Spleen (tissue), 13 donors: ENCODE measurements at regions of chr9 and their contacts with region 1.

Region 1: DNA sequence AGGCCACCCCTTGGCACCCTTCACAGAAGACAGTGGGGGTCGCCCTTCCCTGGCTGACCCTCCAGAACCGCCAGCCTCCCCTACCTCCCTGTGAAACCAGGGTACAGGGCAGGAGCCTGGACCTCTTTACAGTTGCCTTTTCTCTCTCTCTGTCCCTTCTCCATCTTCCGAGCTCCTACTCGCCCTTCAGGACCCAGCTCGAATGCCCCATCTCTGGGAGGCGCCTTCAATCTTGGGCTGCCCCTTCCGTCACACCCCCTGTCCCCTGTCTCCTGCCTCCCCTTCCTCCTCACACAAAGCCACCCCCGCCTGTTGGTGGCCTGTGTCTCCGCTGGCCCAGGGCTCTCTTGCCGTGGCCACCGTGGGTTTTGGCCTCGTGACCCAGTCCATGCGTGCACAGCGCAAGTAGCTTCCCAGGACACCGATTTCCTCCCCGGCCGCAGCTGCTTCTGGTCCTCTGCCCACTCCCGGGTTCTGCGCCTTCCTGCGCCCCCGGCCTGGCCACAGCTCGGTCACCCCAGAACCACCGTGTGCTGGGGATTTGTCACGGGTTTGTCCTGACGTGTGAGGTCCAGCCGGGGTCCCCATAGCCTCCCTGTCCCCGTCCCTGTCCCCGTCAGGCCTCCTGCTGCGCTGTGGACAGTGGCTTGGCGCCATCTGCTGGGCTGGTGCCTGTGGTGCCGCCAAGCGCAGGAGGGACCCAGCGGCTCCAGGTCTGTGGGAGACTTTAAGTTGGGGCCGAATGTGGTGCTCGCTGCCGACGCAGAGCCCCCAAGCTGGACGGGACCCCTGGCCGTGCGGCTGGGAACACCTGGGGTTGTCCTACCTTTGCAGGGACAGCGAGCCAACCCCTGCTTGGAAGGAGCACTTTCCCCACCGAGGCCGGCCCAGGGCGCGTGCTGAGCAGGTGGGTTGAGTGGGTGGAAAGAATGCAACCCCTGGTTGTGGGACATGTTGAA is 4.0 kb upstream of the TMEM250 start:
- DNase-seq: peak; percentile 94
- H3K4me3 ChIP-seq: peak overlapping the region in 2 of 8 donors; percentile 7 to 48
- H3K27ac ChIP-seq: peak overlapping the region in 1 of 8 donors; percentile 45
- H3K4me1 ChIP-seq: peaks cover 9 to 38% (median 29%) of the 10 kb centered on the region in 6 donors
- H3K27me3 ChIP-seq: peaks cover 0 to 19% (median 0%) of the 10 kb centered on the region in 7 donors
- CTCF ChIP-seq: peak; percentile 96 to 99 (median 98)
- POLR2A ChIP-seq: peak in 1 of 3 donors; percentile 25

Region 2: GRCh38 chr9:135602789-135603481 is 519.8 kb before region 1 on chr9:
- intact Hi-C with region 1: loop called (anchors 10 kb)
- DNase-seq: peak; percentile 59
- H3K4me3 ChIP-seq: no peak overlapping the region
- H3K27ac ChIP-seq: no peak overlapping the region
- H3K4me1 ChIP-seq: peaks cover 0 to 8% (median 2%) of the 10 kb centered on the region in 6 donors
- H3K27me3 ChIP-seq: peaks cover 0 to 54% (median 0%) of the 10 kb centered on the region in 7 donors
- CTCF ChIP-seq: peak; percentile 40 to 75 (median 68)
- POLR2A ChIP-seq: no peak

Region 3: GRCh38 chr9:135864447-135865049 is 258.2 kb before region 1 on chr9:
- intact Hi-C with region 1: loop called (anchors 2 kb)
- DNase-seq: peak; percentile 82
- H3K4me3 ChIP-seq: no peak overlapping the region
- H3K27ac ChIP-seq: no peak overlapping the region
- H3K4me1 ChIP-seq: peaks cover 0 to 12% (median 8%) of the 10 kb centered on the region in 6 donors
- H3K27me3 ChIP-seq: no peaks in the 10 kb centered on the region
- CTCF ChIP-seq: peak; percentile 50 to 91 (median 85)
- POLR2A ChIP-seq: no peak

Region 4: DNA sequence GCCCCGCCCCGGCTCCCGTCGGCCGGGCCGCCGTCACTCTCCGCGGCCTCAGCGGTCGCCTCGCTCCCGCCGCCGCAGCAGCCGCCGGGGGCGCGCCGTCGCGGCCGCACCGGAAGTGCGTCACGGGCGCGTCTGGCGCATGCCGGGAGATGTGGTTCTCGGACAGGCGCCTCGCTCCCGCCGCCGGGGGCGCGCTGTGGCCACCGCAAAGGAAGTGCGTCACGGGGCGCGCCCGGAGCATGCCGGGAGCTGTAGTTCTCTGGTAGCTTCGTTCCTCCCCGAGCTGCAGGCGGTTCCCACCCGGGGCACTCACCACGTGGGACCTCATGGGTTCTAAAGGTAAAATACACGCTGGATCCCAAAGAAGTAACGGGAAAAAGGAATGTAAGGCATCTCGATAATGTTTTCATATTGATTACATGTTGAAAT is 161.4 kb before region 1 on chr9 and contains the start of gene UBAC1:
- intact Hi-C with region 1: loop called (anchors 2 kb)
- DNase-seq: peak; percentile 99
- H3K4me3 ChIP-seq: peak within 1 kb of the TSS; percentile 76 to 99 (median 88)
- H3K27ac ChIP-seq: peak within 1 kb of the TSS; percentile 70 to 92 (median 86)
- H3K4me1 ChIP-seq: peaks cover 10 to 59% (median 32%) of the 10 kb centered on the region in 6 donors
- H3K27me3 ChIP-seq: peaks cover 0 to 14% (median 0%) of the 10 kb centered on the region in 7 donors
- CTCF ChIP-seq: peak; percentile 32 to 77 (median 60)
- POLR2A ChIP-seq: peak in 1 of 3 donors; percentile 4
- total RNA-seq, gene UBAC1: 32.3 to 45.8 (median 34.0) TPM

Region 5: GRCh38 chr9:136045971-136046920 is 76.5 kb before region 1 on chr9:
- intact Hi-C with region 1: no loop called
- DNase-seq: peak; percentile 89
- H3K4me3 ChIP-seq: peak overlapping the region in 3 of 8 donors; percentile 23 to 51 (median 24)
- H3K27ac ChIP-seq: peak overlapping the region in 7 of 8 donors; percentile 46 to 92 (median 72)
- H3K4me1 ChIP-seq: peaks cover 3 to 99% (median 61%) of the 10 kb centered on the region in 6 donors
- H3K27me3 ChIP-seq: peaks cover 0 to 14% (median 8%) of the 10 kb centered on the region in 7 donors
- CTCF ChIP-seq: no peak
- POLR2A ChIP-seq: no peak

Region 6: DNA sequence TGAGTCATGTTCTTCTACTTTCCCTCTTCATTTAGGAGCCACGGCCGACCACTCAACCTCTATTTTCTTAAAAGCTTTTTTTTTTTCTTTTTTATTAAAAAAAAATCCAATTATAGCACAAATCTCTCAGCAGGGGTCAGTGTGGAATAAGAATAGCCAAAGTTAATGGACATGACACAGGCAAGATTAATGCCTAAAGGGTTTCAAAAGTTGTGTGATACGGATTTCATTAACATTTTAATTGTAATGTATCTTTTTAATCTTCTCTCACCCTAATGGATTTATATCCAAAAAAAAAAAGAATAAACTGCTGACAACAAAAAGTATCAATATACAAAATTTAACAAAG is 33.0 kb before region 1 on chr9:
- intact Hi-C with region 1: loop called (anchors 5 kb)
- DNase-seq: no peak
- H3K4me3 ChIP-seq: no peak overlapping the region
- H3K27ac ChIP-seq: peak overlapping the region in 4 of 8 donors; percentile 38 to 95 (median 62)
- H3K4me1 ChIP-seq: peaks cover 42 to 100% (median 85%) of the 10 kb centered on the region in 6 donors
- H3K27me3 ChIP-seq: peaks cover 0 to 36% (median 0%) of the 10 kb centered on the region in 7 donors
- CTCF ChIP-seq: peak in 5 of 11 experiments; percentile 15 to 29 (median 25)
- POLR2A ChIP-seq: no peak